Dendritic cell treated with granulocyte-macrophage colony-stimulating factor and Interleukin-4, amounts not matched to agents 40 ng/mL and 50 ng/mL, for 4 days (primary cell): ENCODE measurements at regions of chr4 and their contacts with region 1.

Region 1: DNA sequence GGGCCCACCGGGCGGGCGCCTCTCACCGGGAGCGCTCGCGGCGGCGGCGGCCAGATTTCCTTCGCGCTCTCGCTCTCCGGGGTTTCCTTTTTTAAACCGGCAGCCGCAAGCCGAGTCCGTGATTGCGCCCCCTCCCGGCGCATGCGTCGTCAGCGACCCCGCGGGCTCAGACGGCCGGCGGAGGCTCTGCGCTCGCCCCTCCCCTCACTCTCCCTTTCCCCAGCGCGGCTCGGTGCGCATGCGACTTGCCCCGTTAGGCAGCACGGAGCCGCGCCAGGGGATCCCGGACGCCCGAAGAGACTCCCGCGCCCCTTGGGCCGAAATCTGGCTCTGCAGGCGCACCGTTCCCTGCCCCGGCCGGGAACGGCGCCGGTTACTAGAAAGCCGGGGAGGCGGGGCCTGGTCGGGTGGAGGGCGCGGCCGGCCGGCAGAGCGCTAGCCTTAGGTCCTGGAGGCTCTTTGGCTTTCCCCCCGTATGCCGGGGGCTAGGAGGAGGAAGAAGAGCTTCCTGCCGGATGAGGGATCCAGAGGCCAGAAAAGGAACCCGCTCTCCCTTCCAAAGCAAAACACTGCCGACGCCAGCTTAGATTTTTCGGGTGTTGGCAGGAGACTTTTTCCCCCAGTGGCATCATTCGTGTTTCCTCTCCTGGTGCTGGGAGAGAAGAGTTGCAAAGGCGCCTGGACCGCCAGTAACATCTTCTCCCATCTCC is at the start of gene CLOCK:
- H3K4me3 Mint-ChIP-seq: peak within 1 kb of the TSS; percentile 89
- H3K27ac Mint-ChIP-seq: peak within 1 kb of the TSS; percentile 94
- H3K4me1 Mint-ChIP-seq: peaks cover 17% of the 10 kb centered on the region
- H3K27me3 Mint-ChIP-seq: peaks cover 24% of the 10 kb centered on the region

Region 2: DNA sequence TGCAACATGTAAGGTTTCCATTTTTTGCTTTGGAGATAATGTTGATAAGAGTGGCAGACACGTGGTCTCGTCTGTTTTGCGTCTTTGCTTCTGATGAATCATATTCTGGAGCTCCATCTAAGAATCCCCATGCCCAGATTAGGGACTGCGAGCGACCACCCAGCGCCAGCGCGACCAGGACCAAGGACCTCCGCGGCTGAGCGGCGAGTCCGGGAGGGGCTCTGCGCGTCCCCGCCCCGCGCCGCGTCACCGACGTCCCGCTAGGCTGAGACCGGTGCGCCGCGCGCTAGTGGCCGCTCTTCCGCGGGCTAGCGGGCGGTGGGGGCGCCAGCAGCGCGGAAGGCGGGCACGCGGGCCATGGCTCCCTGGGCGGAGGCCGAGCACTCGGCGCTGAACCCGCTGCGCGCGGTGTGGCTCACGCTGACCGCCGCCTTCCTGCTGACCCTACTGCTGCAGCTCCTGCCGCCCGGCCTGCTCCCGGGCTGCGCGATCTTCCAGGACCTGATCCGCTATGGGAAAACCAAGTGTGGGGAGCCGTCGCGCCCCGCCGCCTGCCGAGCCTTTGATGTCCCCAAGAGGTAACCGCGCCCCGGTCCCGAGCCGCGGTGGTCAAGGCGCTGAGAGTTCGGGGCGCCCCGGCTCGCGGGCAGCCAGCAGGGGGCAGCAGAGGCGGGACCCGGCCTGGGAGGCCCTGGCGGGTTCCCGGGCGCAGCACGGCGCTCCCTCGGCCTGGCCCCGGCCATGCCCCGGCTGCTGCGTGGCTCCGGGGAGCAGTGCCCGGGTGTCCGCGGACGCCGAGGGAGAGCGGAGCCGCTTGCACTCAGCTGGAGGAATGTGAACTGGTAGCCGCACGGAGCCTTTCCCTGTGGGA is 200.7 kb before region 1 on chr4 and contains the start of gene SRD5A3:
- intact Hi-C with region 1: loop called (anchors 5 kb)
- H3K4me3 Mint-ChIP-seq: peak within 1 kb of the TSS; percentile 93
- H3K27ac Mint-ChIP-seq: peak within 1 kb of the TSS; percentile 93
- H3K4me1 Mint-ChIP-seq: peaks cover 16% of the 10 kb centered on the region
- H3K27me3 Mint-ChIP-seq: no peaks in the 10 kb centered on the region

Region 3: GRCh38 chr4:55395529-55396307 is 151.2 kb before region 1 on chr4 and contains the start of gene TMEM165:
- intact Hi-C with region 1: loop called (anchors 5 kb)
- H3K4me3 Mint-ChIP-seq: peak within 1 kb of the TSS; percentile 92
- H3K27ac Mint-ChIP-seq: peak within 1 kb of the TSS; percentile 96
- H3K4me1 Mint-ChIP-seq: peaks cover 38% of the 10 kb centered on the region
- H3K27me3 Mint-ChIP-seq: no peaks in the 10 kb centered on the region

Region 4: DNA sequence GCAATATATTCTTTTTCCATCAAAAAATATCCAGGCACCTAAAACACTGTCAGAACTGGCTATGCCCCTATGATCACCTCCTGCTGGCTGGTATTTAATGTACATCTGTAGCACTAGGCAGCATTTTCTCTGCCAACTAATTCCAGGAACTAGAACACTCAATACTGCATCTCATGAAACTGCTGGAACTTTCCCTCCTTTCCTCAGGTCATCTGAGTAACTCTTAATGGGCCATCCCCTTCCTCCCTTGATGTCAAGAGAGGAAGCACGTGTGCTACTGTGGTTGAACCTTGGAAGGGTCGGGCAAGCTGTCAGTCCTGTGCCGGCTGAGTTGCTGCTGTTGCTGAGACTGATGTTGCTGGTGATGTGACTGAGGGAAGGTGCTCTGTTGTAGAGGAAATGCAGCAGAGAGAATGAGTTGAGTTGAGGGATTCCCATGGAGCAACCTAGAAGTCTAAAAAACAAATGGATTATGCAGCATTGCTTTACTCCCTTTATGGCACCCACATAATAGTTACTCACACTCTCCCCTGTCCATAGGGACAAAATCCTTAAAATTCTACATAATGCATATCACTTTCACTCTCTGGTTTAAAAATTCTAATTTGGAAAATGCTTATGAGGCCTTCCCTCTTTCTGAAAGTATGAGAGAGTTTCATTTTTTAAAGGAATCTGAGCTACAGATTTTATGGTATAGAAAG is 111.6 kb before region 1 on chr4:
- intact Hi-C with region 1: loop called (anchors 10 kb)
- H3K4me3 Mint-ChIP-seq: no peak overlapping the region
- H3K27ac Mint-ChIP-seq: no peak overlapping the region
- H3K4me1 Mint-ChIP-seq: no peaks in the 10 kb centered on the region
- H3K27me3 Mint-ChIP-seq: no peaks in the 10 kb centered on the region

Region 5: DNA sequence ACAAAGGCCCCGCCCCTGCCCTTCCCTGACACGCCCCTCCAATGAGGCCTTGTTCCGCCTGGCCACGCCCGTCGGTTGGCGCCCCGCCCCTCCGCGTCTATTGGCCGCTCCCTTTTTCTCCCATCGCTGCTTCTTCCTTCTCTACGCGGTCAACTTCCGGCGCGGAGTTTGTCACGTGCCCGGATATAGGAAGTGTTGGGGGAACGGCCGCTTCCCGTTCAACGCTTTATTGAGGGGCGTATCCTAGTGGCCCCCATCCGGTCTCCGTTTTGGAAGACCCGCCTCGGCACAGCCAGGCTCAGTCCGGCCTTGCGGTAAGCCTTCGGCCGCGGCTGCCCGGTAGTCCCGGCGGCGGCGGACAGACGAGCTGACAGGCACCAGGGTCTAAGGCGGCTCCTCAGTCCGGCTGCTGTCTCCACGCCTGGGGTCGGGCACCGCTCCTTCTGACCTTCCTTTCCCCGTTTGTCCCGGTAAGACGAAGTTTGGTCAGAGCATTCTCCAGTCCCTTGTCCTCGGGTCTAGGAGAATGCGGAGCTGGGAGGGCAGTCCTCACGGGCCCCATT is 306.7 kb after region 1 on chr4 and contains the start of gene EXOC1:
- intact Hi-C with region 1: loop called (anchors 5 kb)
- H3K4me3 Mint-ChIP-seq: no peak within 1 kb of the TSS
- H3K27ac Mint-ChIP-seq: peak within 1 kb of the TSS; percentile 94
- H3K4me1 Mint-ChIP-seq: no peaks in the 10 kb centered on the region
- H3K27me3 Mint-ChIP-seq: peaks cover 8% of the 10 kb centered on the region

Region 6: GRCh38 chr4:56698329-56698728 is 1151.4 kb after region 1 on chr4:
- intact Hi-C with region 1: no loop called
- H3K4me3 Mint-ChIP-seq: no peak overlapping the region
- H3K27ac Mint-ChIP-seq: no peak overlapping the region
- H3K4me1 Mint-ChIP-seq: peaks cover 6% of the 10 kb centered on the region
- H3K27me3 Mint-ChIP-seq: no peaks in the 10 kb centered on the region